Activated CD4-positive, alpha-beta T cell treated with anti-CD3 and anti-CD28 coated beads, Interleukin-2, amount 10 ng/mL, durations not matched to agents 24 days and 14 days (primary cell): ENCODE measurements at regions of chr20 and their contacts with region 1.

Region 1: DNA sequence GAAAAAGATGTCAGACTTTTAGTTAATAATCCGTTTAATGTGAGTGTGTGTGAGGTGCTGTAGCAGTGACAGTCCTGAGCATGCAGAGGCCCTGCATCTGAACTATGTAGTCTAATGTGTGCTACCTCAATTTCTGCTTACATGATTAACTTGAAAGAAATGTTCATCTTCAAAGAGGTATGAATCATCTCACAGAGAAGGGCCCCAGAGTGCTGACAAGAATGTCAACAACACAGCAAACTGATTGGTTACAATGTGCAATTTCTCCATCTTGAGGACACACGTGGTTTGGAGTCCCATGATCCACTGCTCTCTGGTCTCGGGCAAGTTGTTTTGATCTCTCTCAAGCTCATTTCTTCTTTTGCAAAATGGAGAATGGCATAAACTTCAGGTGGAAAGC is 61.7 kb upstream of the EMILIN3 start:
- DNase-seq: peak; percentile 85
- H3K4me3 Mint-ChIP-seq: peak overlapping the region; percentile 64
- H3K27ac Mint-ChIP-seq: peak overlapping the region; percentile 91
- H3K4me1 Mint-ChIP-seq: peaks cover 46% of the 10 kb centered on the region
- H3K27me3 Mint-ChIP-seq: no peaks in the 10 kb centered on the region

Region 2: GRCh38 chr20:41462372-41463161 is 34.3 kb after region 1 on chr20:
- intact Hi-C with region 1: loop called (anchors 1 kb)
- DNase-seq: no peak
- H3K4me3 Mint-ChIP-seq: no peak overlapping the region
- H3K27ac Mint-ChIP-seq: peak overlapping the region; percentile 7
- H3K4me1 Mint-ChIP-seq: peaks cover 13% of the 10 kb centered on the region
- H3K27me3 Mint-ChIP-seq: no peaks in the 10 kb centered on the region

Region 3: DNA sequence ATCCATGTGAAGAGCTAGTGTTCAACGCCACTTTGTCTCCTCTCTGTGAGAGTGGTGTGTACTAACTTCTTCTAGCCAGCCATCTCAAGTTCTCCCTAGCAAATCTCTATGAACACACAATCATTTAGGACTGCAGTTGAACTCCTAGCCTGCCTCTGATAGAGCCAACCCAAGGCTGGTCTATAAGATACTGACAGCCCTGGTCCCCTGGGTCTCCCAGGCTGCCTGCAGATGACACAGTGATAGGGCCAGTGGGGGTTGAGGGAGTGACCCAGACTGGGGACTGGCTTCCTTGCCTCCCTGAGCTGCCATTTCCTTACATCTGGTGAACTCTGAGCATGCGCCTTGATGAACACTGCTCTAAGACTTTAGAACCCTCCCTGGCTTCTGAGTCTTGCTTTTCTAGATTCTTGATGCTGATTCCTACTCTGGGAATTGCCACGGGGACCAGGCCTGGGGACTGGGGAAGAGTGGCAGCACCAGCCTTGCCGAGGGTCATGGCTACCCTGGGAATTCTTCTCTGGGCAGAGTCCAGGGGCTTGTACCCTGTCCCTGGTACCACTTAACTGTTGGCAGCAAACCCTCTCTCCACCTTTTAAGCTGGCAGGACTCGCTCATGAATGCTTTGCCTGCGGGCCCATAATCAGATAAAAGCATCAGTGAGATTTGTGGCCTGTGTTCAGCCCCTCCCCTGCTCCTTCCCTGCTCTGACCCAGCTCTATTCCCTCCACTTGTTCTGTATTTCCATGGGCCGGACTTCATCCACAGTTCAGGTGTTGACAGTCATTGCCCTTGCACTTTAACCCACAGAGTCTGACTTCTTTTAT is 320.7 kb after region 1 on chr20:
- intact Hi-C with region 1: no loop called
- DNase-seq: no peak
- H3K4me3 Mint-ChIP-seq: no peak overlapping the region
- H3K27ac Mint-ChIP-seq: no peak overlapping the region
- H3K4me1 Mint-ChIP-seq: no peaks in the 10 kb centered on the region
- H3K27me3 Mint-ChIP-seq: peaks cover 7% of the 10 kb centered on the region